Activated B cell treated with CpG ODN at 0.5 μM for 24 hours (primary cell): ENCODE measurements at regions of chr11 and their contacts with region 1.

Region 1: DNA sequence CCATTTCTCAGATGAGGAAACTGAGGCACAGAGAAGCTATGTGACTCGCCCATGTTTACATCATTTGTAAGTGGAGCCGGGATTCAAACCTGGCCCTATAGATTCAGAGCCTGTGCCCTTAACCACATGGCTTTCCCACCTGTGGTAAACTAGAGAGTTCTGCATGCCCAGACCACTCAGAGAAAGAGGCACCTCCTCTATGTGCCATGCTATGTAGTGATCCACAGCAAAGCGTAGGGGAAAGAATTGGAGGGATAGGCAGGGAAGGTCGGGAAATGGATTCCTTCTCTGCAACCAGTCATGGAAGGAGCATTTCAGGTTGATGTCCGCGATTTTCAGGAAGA is 15.4 kb upstream of the POU2AF2 start:
- DNase-seq: no peak
- ATAC-seq: peak; percentile 9
- H3K4me3 Mint-ChIP-seq: peak overlapping the region; percentile 72
- H3K27ac Mint-ChIP-seq: no peak overlapping the region
- H3K4me1 Mint-ChIP-seq: peaks cover 40% of the 10 kb centered on the region
- H3K27me3 Mint-ChIP-seq: no peaks in the 10 kb centered on the region
- CTCF ChIP-seq: no peak

Region 2: GRCh38 chr11:110195845-110196754 is 1034.0 kb before region 1 on chr11:
- CTCF ChIA-PET with region 1: interaction called, 7 read pairs
- POLR2A ChIA-PET with region 1: no interaction called
- intact Hi-C with region 1: loop called (anchors 1 kb)
- DNase-seq: no peak
- ATAC-seq: no peak
- H3K4me3 Mint-ChIP-seq: no peak overlapping the region
- H3K27ac Mint-ChIP-seq: no peak overlapping the region
- H3K4me1 Mint-ChIP-seq: peaks cover 11% of the 10 kb centered on the region
- H3K27me3 Mint-ChIP-seq: peaks cover 23% of the 10 kb centered on the region
- CTCF ChIP-seq: no peak

Region 3: GRCh38 chr11:110447897-110448745 is 782.0 kb before region 1 on chr11:
- CTCF ChIA-PET with region 1: interaction called, 28 read pairs
- POLR2A ChIA-PET with region 1: no interaction called
- intact Hi-C with region 1: loop called (anchors 1 kb)
- DNase-seq: no peak
- ATAC-seq: no peak
- H3K4me3 Mint-ChIP-seq: no peak overlapping the region
- H3K27ac Mint-ChIP-seq: no peak overlapping the region
- H3K4me1 Mint-ChIP-seq: peaks cover 7% of the 10 kb centered on the region
- H3K27me3 Mint-ChIP-seq: no peaks in the 10 kb centered on the region
- CTCF ChIP-seq: no peak

Region 4: GRCh38 chr11:110711776-110712658 is 518.1 kb before region 1 on chr11 and contains the start of gene ARHGAP20:
- CTCF ChIA-PET with region 1: interaction called, 3 read pairs
- POLR2A ChIA-PET with region 1: no interaction called
- intact Hi-C with region 1: loop called (anchors 1 kb)
- DNase-seq: peak; percentile 71
- ATAC-seq: peak; percentile 95
- H3K4me3 Mint-ChIP-seq: peak within 1 kb of the TSS; percentile 84
- H3K27ac Mint-ChIP-seq: no peak within 1 kb of the TSS
- H3K4me1 Mint-ChIP-seq: peaks cover 21% of the 10 kb centered on the region
- H3K27me3 Mint-ChIP-seq: peaks cover 42% of the 10 kb centered on the region
- CTCF ChIP-seq: no peak
- total RNA-seq, gene ARHGAP20: 0.11 and 0.17 TPM in 2 replicates

Region 5: DNA sequence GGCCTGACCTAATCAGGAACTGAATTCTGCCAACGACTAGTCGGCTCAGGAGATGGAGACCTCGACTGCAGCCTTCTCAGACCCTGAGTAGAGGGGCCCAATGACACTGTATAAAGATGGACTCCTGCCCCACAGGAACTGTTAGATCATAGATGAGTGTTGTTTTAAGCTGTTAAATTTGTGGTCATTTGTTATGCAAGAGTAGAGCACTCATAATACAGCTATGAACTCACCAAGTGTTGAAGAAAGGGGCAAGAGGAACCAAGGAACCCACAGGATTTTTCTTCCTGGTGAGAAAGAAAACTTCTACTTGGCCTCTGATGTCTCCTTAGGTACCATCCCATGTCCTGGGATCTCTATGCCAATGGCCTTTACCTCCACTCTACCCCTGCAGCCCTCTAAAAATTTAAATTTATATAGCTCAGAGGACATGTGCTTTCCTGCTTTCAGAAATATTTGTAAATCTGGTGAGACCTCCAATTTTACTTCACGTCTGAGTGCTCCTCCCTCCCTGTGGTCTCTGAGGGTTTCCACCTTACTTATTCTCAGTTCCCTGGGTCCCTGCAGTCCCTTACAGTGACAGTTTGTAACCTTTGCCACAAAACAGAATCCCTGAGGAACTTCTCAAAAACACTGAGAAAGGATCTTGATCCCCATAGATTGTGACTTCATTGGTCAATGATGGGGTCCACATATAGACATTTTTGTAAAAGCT is 261.6 kb before region 1 on chr11:
- CTCF ChIA-PET with region 1: no interaction called
- POLR2A ChIA-PET with region 1: no interaction called
- intact Hi-C with region 1: no loop called
- DNase-seq: no peak
- ATAC-seq: no peak
- H3K4me3 Mint-ChIP-seq: no peak overlapping the region
- H3K27ac Mint-ChIP-seq: no peak overlapping the region
- H3K4me1 Mint-ChIP-seq: peaks cover 13% of the 10 kb centered on the region
- H3K27me3 Mint-ChIP-seq: peaks cover 4% of the 10 kb centered on the region
- CTCF ChIP-seq: no peak

Region 6: DNA sequence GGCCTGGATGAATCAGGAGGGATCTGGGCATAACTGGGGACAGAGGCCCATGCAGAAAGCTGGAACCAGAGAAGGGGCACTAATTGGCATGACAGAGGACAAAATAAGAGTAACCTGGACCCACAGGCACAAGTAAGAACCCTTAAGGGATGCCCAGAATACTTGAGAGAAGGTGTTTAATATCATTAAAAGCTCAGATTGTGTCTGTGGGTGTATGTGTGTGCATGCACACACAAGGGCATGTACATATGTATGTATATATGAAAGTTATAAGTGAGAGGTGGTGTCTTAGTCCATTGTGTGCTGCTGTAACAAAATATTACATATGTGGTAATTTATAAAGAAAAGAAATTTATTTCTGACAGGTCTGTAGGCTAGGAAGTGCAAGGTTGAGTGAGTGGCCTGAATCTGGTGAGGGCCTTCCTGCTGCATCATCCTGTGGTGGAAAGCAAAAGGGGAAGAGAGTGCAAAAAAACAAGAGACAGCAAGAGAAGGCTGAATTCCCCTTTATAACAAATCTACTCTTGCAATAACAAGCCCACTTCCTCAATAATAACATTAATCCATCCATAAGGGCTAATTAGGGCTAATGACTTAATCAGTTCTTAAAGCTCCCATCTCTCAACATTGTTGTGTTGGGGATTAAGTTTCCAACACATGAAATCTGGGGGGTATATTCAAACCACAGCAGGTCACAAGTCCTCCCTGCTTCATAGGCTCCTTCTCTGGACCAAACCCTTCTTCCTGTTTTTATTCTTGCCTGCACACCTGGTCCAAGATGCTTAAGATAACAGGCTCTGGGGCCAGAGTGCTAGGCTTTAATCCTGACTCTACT is 52.8 kb before region 1 on chr11:
- CTCF ChIA-PET with region 1: interaction called, 5 read pairs
- POLR2A ChIA-PET with region 1: interaction called, 4 read pairs
- intact Hi-C with region 1: loop called (anchors 1 kb)
- DNase-seq: peak; percentile 25
- ATAC-seq: peak; percentile 85
- H3K4me3 Mint-ChIP-seq: peak overlapping the region; percentile 62
- H3K27ac Mint-ChIP-seq: peak overlapping the region; percentile 93
- H3K4me1 Mint-ChIP-seq: peaks cover 77% of the 10 kb centered on the region
- H3K27me3 Mint-ChIP-seq: no peaks in the 10 kb centered on the region
- CTCF ChIP-seq: no peak

Region 7: DNA sequence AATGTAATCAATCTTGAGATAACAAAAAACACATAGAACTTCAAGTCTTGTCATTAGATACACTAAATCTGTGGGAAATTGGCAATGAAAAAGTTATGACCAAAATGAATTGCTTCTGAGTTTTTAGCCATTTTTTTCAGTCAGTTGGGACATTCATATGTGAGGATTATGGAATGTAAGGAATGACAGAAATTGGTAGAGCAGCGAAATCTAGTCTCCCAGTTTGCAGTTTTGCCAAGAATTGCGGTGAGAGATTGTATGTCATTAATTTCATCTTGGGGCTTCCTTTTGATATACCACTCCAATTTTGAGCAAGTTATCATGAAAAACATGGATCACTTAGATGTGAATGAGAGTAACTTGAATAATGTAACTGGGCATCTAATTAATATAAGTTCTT is 422.1 kb after region 1 on chr11:
- CTCF ChIA-PET with region 1: no interaction called
- POLR2A ChIA-PET with region 1: no interaction called
- intact Hi-C with region 1: no loop called
- DNase-seq: no peak
- ATAC-seq: no peak
- H3K4me3 Mint-ChIP-seq: no peak overlapping the region
- H3K27ac Mint-ChIP-seq: no peak overlapping the region
- H3K4me1 Mint-ChIP-seq: no peaks in the 10 kb centered on the region
- H3K27me3 Mint-ChIP-seq: no peaks in the 10 kb centered on the region
- CTCF ChIP-seq: no peak